Spleen (tissue), 13 donors: ENCODE measurements at regions of chr5 and their contacts with region 1.

Region 1: DNA sequence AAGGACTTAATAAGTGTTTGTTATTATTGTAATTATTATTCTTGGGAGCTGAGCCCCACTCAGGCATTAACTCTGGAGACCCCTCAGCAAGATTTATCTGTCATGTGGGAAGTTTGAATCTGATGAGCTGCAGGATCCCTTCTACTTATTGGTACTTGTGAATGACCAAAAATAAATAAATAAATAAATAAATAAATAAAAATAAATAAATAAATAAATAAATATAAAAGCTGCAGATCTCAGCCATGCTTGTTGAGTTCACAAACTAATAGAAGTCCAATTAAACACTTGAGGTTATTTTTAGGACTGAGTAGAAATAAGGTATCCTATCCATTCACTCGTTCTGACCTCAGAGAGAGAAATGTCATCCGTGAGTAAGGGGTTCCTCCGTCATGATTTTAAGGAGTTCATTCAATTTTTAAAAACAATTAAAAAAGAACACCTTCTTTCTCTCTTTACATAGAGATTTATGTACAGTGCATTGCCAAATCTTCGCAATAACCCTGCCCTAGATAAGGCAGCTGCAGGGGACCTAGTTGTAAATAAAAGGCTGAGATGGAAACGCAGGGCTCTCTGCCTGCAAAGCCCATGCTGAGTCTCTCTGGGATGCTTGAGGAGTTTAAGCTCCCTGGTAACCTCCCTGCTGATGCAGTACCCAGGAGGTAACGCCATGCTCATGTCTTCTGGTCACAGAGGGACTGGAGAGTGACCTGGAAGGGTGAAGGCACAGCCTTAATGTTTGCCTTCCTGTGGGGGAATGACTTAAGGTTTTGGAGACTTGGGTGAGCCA is 1.2 kb downstream of the EFCAB9 start:
- DNase-seq: no peak
- H3K4me3 ChIP-seq: no peak overlapping the region
- H3K27ac ChIP-seq: no peak overlapping the region
- H3K4me1 ChIP-seq: peaks cover 0 to 10% (median 3%) of the 10 kb centered on the region in 6 donors
- H3K27me3 ChIP-seq: peaks cover 0 to 5% (median 0%) of the 10 kb centered on the region in 7 donors
- CTCF ChIP-seq: no peak
- POLR2A ChIP-seq: no peak

Region 2: DNA sequence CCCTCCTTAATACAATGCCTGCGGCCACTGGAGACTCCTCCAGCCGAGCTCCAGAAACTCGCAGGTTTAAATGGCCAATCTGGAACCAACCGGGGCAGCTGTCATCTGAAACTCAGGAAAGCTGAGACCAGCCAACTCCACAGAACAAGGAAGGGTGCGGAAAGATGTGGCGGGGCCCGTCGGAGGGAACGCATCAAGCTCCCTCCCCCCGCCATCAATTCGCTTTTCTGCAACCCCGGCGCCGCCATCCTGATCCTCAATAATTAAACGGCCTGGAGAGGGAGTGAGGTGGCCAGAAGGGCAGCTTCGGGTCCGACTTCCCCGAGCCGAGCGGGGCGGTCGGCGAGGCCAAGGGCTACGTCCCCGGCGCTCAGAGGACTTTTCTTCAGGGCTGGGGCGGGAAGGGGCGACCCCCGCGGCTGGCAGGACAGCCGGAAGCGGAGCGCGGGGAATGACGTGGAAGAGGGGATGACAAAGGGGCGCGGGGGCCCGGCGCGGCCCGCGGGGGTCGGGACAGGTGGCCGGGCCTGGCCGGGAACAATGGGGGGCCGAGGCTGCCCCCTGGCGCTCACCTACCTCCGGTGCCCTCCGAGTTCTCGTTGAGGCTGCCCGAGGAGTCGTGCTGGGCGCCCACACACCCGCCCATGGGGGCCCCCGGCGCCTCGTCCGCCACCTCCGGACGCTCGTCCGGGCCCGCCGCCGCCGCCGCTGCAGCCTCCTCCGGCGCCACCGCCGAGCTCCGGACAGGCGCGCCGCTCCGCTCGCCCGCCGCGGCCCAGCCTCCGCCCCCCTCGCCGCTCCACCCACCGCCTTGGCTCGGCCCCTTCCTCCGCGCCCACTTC is 88.1 kb after region 1 on chr5 and contains the start of gene UBTD2:
- intact Hi-C with region 1: loop called (anchors 10 kb)
- DNase-seq: peak; percentile 96
- H3K4me3 ChIP-seq: peak within 1 kb of the TSS; percentile 65 to 97 (median 86)
- H3K27ac ChIP-seq: peak within 1 kb of the TSS; percentile 64 to 95 (median 84)
- H3K4me1 ChIP-seq: peaks cover 14 to 39% (median 26%) of the 10 kb centered on the region in 6 donors
- H3K27me3 ChIP-seq: no peaks in the 10 kb centered on the region
- CTCF ChIP-seq: peak in 10 of 11 experiments; percentile 4 to 72 (median 48)
- POLR2A ChIP-seq: no peak
- total RNA-seq, gene UBTD2: 7.8 to 13.9 (median 9.8) TPM

Region 3: GRCh38 chr5:173383711-173384110 is 1188.5 kb after region 1 on chr5:
- intact Hi-C with region 1: no loop called
- DNase-seq: no peak
- H3K4me3 ChIP-seq: no peak overlapping the region
- H3K27ac ChIP-seq: no peak overlapping the region
- H3K4me1 ChIP-seq: no peaks in the 10 kb centered on the region
- H3K27me3 ChIP-seq: peaks cover 0 to 22% (median 0%) of the 10 kb centered on the region in 7 donors
- CTCF ChIP-seq: no peak
- POLR2A ChIP-seq: no peak